CD8-positive, alpha-beta T cell (primary cell): ENCODE measurements at regions of chr2 and their contacts with region 1.

Region 1: DNA sequence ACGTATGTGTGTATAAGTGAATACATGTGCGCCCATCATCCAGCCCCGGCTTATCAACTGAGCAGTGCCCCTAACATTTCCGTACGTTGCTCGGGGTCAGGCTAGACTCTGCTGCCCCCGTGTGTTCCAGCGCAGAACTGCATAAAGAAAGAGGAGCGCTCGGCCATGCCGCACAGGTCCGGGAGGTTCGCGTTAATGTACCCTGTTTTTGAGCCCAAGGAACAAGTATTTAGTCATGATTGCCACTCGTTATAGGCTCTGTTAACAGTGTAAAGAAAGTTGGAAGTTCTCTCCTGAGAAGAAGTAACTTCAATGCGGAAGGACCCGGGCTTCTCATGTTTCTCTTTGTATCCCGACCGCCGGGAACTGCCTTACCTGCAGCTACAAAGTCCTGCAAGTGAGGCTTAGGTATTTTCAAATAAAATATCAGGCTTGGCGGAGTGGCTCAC is 55.7 kb downstream of the CD8B2 start:
- DNase-seq: peak; percentile 60 to 87 (median 76)
- ATAC-seq: peak; percentile 100
- H3K4me3 ChIP-seq: peak overlapping the region in 1 of 2 experiments; percentile 7
- H3K4me3 Mint-ChIP-seq: peak overlapping the region; percentile 65
- H3K27ac ChIP-seq: no peak overlapping the region
- H3K27ac Mint-ChIP-seq: no peak overlapping the region
- H3K4me1 ChIP-seq: peaks cover 4% of the 10 kb centered on the region
- H3K4me1 Mint-ChIP-seq: peaks cover 3% of the 10 kb centered on the region
- H3K27me3 ChIP-seq: peaks cover 0 to 4% of the 10 kb centered on the region in 2 experiments
- H3K27me3 Mint-ChIP-seq: peaks cover 27% of the 10 kb centered on the region
- CTCF ChIP-seq: peak; percentile 91

Region 2: GRCh38 chr2:105369747-105370690 is 1172.8 kb before region 1 on chr2:
- CTCF ChIA-PET with region 1: interaction called, 3 read pairs
- POLR2A ChIA-PET with region 1: no interaction called
- intact Hi-C with region 1: loop called in 1 of 2 experiments (anchors 2 kb)
- DNase-seq: peak; percentile 73 to 91 (median 87)
- ATAC-seq: peak; percentile 100
- H3K4me3 ChIP-seq: no peak overlapping the region
- H3K4me3 Mint-ChIP-seq: no peak overlapping the region
- H3K27ac ChIP-seq: no peak overlapping the region
- H3K27ac Mint-ChIP-seq: no peak overlapping the region
- H3K4me1 ChIP-seq: peaks cover 6% of the 10 kb centered on the region
- H3K4me1 Mint-ChIP-seq: peaks cover 11% of the 10 kb centered on the region
- H3K27me3 ChIP-seq: no peaks in the 10 kb centered on the region
- H3K27me3 Mint-ChIP-seq: peaks cover 2% of the 10 kb centered on the region
- CTCF ChIP-seq: peak; percentile 81

Region 3: GRCh38 chr2:105545730-105546627 is 996.9 kb before region 1 on chr2:
- CTCF ChIA-PET with region 1: interaction called, 3 read pairs
- POLR2A ChIA-PET with region 1: no interaction called
- intact Hi-C with region 1: loop called in 1 of 2 experiments (anchors 5 kb)
- DNase-seq: peak; percentile 39 to 77 (median 68)
- ATAC-seq: peak; percentile 78
- H3K4me3 ChIP-seq: no peak overlapping the region
- H3K4me3 Mint-ChIP-seq: peak overlapping the region; percentile 47
- H3K27ac ChIP-seq: no peak overlapping the region
- H3K27ac Mint-ChIP-seq: no peak overlapping the region
- H3K4me1 ChIP-seq: peaks cover 5% of the 10 kb centered on the region
- H3K4me1 Mint-ChIP-seq: peaks cover 14% of the 10 kb centered on the region
- H3K27me3 ChIP-seq: no peaks in the 10 kb centered on the region
- H3K27me3 Mint-ChIP-seq: peaks cover 3% of the 10 kb centered on the region
- CTCF ChIP-seq: peak; percentile 96

Region 4: DNA sequence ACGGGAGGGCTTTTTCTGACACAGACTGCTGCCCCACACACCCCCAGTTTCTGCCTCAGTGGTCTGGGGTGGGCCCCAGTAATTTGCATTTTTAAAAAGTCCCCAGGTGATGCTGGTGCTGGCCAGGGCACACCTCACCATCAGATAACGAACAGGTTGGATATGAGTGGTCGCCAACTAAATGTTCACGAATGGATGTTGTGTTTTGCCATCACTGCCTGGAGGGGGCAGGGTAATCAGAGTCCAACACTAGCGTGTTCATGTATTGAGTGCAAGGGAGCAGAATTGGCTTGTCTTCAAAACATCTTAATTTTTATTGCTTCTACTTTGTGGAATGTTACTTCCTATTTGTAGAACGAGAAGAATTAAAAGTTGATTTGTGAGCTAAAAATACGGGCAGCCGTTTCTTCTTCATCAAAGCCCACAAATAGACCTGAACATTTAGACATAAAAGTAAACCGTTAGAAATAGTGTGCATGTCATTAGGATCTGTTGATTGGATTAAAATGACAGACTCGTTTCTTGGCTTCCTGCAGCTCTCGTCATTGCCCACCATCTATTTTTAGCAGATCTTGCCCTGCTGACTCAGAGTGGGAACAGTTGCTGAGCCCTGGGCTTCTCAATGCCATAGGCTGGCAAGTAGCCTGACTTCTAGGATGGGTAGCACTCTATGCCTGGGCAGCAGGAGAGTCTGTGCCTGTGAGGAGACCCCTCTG is 752.9 kb before region 1 on chr2:
- CTCF ChIA-PET with region 1: no interaction called
- POLR2A ChIA-PET with region 1: no interaction called
- intact Hi-C with region 1: loop called in 1 of 2 experiments (anchors 10 kb)
- DNase-seq: peak in 5 of 9 experiments; percentile 56 to 84 (median 70)
- ATAC-seq: peak; percentile 83
- H3K4me3 ChIP-seq: no peak overlapping the region
- H3K4me3 Mint-ChIP-seq: peak overlapping the region; percentile 62
- H3K27ac ChIP-seq: peak overlapping the region; percentile 8 to 86
- H3K27ac Mint-ChIP-seq: peak overlapping the region; percentile 94
- H3K4me1 ChIP-seq: peaks cover 91% of the 10 kb centered on the region
- H3K4me1 Mint-ChIP-seq: peaks cover 93% of the 10 kb centered on the region
- H3K27me3 ChIP-seq: no peaks in the 10 kb centered on the region
- H3K27me3 Mint-ChIP-seq: no peaks in the 10 kb centered on the region
- CTCF ChIP-seq: peak; percentile 39

Region 5: GRCh38 chr2:105858868-105859693 is 683.8 kb before region 1 on chr2:
- CTCF ChIA-PET with region 1: no interaction called
- POLR2A ChIA-PET with region 1: no interaction called
- intact Hi-C with region 1: no loop called
- DNase-seq: peak in 5 of 9 experiments; percentile 29 to 49 (median 44)
- ATAC-seq: peak; percentile 32
- H3K4me3 ChIP-seq: no peak overlapping the region
- H3K4me3 Mint-ChIP-seq: peak overlapping the region; percentile 57
- H3K27ac ChIP-seq: peak overlapping the region; percentile 32 to 71
- H3K27ac Mint-ChIP-seq: peak overlapping the region; percentile 94
- H3K4me1 ChIP-seq: peaks cover 92% of the 10 kb centered on the region
- H3K4me1 Mint-ChIP-seq: peaks cover 91% of the 10 kb centered on the region
- H3K27me3 ChIP-seq: no peaks in the 10 kb centered on the region
- H3K27me3 Mint-ChIP-seq: no peaks in the 10 kb centered on the region
- CTCF ChIP-seq: no peak

Region 6: GRCh38 chr2:106104332-106105062 is 438.3 kb before region 1 on chr2:
- CTCF ChIA-PET with region 1: interaction called, 13 read pairs
- POLR2A ChIA-PET with region 1: no interaction called
- intact Hi-C with region 1: loop called (anchors 1 kb)
- DNase-seq: peak; percentile 35 to 82 (median 67)
- ATAC-seq: peak; percentile 78
- H3K4me3 ChIP-seq: no peak overlapping the region
- H3K4me3 Mint-ChIP-seq: no peak overlapping the region
- H3K27ac ChIP-seq: no peak overlapping the region
- H3K27ac Mint-ChIP-seq: peak overlapping the region; percentile 78
- H3K4me1 ChIP-seq: no peaks in the 10 kb centered on the region
- H3K4me1 Mint-ChIP-seq: peaks cover 21% of the 10 kb centered on the region
- H3K27me3 ChIP-seq: no peaks in the 10 kb centered on the region
- H3K27me3 Mint-ChIP-seq: no peaks in the 10 kb centered on the region
- CTCF ChIP-seq: peak; percentile 94

Region 7: DNA sequence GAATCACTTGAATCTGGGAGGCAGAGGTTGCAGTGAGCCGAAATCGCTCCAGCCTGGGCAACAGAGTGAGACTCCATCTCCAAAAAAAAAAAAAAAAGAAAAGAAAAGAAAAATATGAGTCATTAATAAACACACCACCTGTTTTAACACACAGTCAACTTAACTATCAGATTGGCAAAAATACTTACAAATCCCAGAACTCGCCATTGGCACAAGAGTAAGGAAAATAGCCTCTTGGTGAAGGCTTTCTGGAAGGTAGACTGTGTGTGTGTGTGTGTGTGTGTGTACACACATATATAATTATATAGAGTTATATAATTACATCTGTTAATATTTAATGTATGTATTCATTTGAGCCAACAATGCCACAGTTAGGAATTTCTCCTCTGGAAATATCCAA is 285.0 kb before region 1 on chr2:
- CTCF ChIA-PET with region 1: no interaction called
- POLR2A ChIA-PET with region 1: no interaction called
- intact Hi-C with region 1: loop called in 1 of 2 experiments (anchors 10 kb)
- DNase-seq: no peak
- ATAC-seq: no peak
- H3K4me3 ChIP-seq: no peak overlapping the region
- H3K4me3 Mint-ChIP-seq: no peak overlapping the region
- H3K27ac ChIP-seq: no peak overlapping the region
- H3K27ac Mint-ChIP-seq: no peak overlapping the region
- H3K4me1 ChIP-seq: no peaks in the 10 kb centered on the region
- H3K4me1 Mint-ChIP-seq: no peaks in the 10 kb centered on the region
- H3K27me3 ChIP-seq: no peaks in the 10 kb centered on the region
- H3K27me3 Mint-ChIP-seq: no peaks in the 10 kb centered on the region
- CTCF ChIP-seq: no peak

Region 8: GRCh38 chr2:106269591-106270291 is 273.1 kb before region 1 on chr2:
- CTCF ChIA-PET with region 1: no interaction called
- POLR2A ChIA-PET with region 1: no interaction called
- intact Hi-C with region 1: no loop called
- DNase-seq: peak in 6 of 9 experiments; percentile 18 to 72 (median 40)
- ATAC-seq: peak; percentile 70
- H3K4me3 ChIP-seq: peak overlapping the region; percentile 54 to 57
- H3K4me3 Mint-ChIP-seq: peak overlapping the region; percentile 89
- H3K27ac ChIP-seq: no peak overlapping the region
- H3K27ac Mint-ChIP-seq: no peak overlapping the region
- H3K4me1 ChIP-seq: peaks cover 8% of the 10 kb centered on the region
- H3K4me1 Mint-ChIP-seq: peaks cover 21% of the 10 kb centered on the region
- H3K27me3 ChIP-seq: peaks cover 4 to 9% of the 10 kb centered on the region in 2 experiments
- H3K27me3 Mint-ChIP-seq: peaks cover 23% of the 10 kb centered on the region
- CTCF ChIP-seq: no peak

Region 9: DNA sequence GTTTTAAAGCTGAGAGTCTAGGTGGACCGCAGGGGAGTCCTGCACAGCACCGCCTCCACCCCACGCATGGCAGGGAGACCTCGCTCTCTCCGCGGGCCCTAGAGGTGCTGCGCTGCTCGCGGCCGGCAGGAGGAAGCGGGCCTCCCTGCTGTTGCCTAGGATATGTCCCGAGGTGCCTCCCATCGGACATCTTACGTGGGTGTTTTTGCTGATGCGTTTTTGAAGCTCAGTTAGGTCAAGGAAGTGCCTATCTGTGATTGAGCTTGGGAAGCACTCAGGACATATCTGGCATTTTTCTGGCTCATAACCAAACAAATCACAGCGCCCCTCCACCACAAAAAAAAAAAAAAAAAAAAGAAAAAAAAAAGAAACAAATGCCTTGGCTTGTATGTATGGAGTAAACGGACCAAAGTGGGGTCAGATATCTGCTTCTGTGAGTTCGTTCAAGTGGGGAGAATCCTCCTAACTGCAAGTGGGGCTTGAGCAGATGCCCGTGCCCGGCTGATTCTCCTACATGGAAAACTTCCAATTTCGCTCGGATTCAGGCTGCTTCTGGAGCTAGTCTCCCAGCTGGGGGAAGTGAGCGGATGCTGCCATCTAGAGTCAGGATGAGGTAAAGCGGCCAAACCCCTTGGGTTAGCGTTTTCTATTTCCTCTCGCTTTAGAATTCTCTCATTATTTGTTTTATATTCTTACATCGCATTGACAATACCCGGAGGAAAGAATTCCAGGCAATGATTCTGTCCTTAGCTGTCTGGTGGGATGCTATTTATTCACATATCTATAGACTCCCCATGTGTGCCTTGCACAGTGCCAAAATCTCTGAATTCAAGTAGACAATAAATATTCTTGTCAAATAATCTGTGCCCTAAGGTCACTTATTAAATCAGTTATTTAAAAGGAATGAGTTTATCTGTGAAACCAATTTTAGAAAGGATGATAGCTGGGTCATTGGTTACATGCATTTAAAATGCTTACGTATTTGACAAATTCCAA is 39.6 kb after region 1 on chr2:
- CTCF ChIA-PET with region 1: interaction called, 3 read pairs
- POLR2A ChIA-PET with region 1: no interaction called
- intact Hi-C with region 1: loop called in 1 of 2 experiments (anchors 1 kb)
- DNase-seq: peak; percentile 26 to 74 (median 60)
- ATAC-seq: peak; percentile 83
- H3K4me3 ChIP-seq: peak overlapping the region; percentile 54 to 57
- H3K4me3 Mint-ChIP-seq: peak overlapping the region; percentile 91
- H3K27ac ChIP-seq: no peak overlapping the region
- H3K27ac Mint-ChIP-seq: no peak overlapping the region
- H3K4me1 ChIP-seq: peaks cover 5% of the 10 kb centered on the region
- H3K4me1 Mint-ChIP-seq: peaks cover 15% of the 10 kb centered on the region
- H3K27me3 ChIP-seq: peaks cover 0 to 4% of the 10 kb centered on the region in 2 experiments
- H3K27me3 Mint-ChIP-seq: peaks cover 44% of the 10 kb centered on the region
- CTCF ChIP-seq: peak; percentile 93

Region 10: DNA sequence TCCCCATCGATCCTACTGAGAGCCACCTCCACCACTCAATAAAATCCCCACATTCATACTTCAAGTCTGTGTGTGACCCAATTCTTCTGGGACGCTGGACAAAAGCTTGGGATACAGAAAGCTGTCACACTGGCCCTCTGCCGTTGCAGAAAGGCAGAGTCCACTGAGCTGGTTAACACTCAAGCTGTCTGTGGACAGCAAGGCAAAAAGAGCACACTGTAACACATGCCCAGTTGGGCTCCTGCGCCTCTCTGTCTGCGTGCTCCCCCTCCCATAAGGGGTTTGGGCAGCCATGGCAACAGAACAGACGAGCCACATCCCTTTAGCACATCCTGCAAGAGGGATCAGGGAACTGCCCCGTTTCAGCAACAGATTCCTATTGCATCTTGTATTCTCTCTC is 1177.0 kb after region 1 on chr2:
- CTCF ChIA-PET with region 1: no interaction called
- POLR2A ChIA-PET with region 1: no interaction called
- intact Hi-C with region 1: no loop called
- DNase-seq: no peak
- ATAC-seq: no peak
- H3K4me3 ChIP-seq: no peak overlapping the region
- H3K4me3 Mint-ChIP-seq: no peak overlapping the region
- H3K27ac ChIP-seq: no peak overlapping the region
- H3K27ac Mint-ChIP-seq: no peak overlapping the region
- H3K4me1 ChIP-seq: no peaks in the 10 kb centered on the region
- H3K4me1 Mint-ChIP-seq: no peaks in the 10 kb centered on the region
- H3K27me3 ChIP-seq: no peaks in the 10 kb centered on the region
- H3K27me3 Mint-ChIP-seq: no peaks in the 10 kb centered on the region
- CTCF ChIP-seq: no peak